ENCODE measurements at regions of chr7 and their contacts with region 1.

Region 1: DNA sequence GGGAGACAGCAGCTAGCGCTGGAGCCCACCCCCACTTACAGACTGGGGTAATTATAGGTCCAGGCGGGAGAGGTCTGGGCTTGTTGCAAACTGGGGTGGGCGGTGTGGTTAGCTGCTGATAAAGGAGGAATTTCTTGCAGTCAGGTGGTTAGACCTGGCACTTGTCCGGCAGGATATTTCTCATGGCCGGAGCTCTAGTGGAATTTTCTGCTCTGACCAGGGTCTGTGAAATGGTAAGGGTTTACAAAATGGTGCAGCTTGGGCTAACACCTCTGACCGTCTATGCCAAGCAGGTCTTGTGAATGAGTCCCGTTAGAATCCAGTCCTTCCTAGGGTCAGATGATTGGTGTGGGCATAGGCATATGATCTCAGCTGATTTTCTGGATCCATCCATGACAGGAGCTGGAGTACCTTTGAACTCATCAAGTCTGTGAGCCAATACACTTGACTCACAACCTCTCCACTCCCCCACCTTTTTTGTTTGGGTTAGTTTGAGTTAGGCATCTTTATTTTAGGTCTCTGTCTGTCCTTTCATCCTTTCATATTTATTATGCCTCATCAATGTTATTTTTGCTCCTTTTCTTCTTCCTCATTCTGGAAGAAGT is 213.4 kb downstream of the SUGCT start:
- DNase-seq: no peak
- H3K4me3 ChIP-seq: no peak overlapping the region
- H3K27ac ChIP-seq: no peak overlapping the region
- H3K4me1 ChIP-seq: no peaks in the 10 kb centered on the region
- H3K27me3 ChIP-seq: no peaks in the 10 kb centered on the region
- CTCF ChIP-seq: no peak
- POLR2A ChIP-seq: no peak

Region 2: GRCh38 chr7:40720416-40720815 is 372.2 kb after region 1 on chr7:
- CTCF ChIA-PET with region 1: no interaction called
- POLR2A ChIA-PET with region 1: no interaction called
- dilution Hi-C with region 1: no loop called
- intact Hi-C with region 1: loop called (anchors 10 kb)
- DNase-seq: no peak
- H3K4me3 ChIP-seq: no peak overlapping the region
- H3K27ac ChIP-seq: no peak overlapping the region
- H3K4me1 ChIP-seq: peaks cover 4% of the 10 kb centered on the region
- H3K27me3 ChIP-seq: peaks cover 3 to 6% of the 10 kb centered on the region in 2 experiments
- CTCF ChIP-seq: no peak
- POLR2A ChIP-seq: no peak

Measured in endothelial cell of umbilical vein (primary cell).